ENCODE measurements at regions of chr1 and their contacts with region 1.

Region 1: GRCh38 chr1:25624156-25624555 is 7.6 kb downstream of the MAN1C1 start:
- DNase-seq: peak in 4 of 14 experiments; percentile 23 to 61 (median 50)
- ATAC-seq: no peak
- H3K4me3 ChIP-seq: no peak overlapping the region
- H3K4me3 Mint-ChIP-seq: peak overlapping the region; percentile 100
- H3K27ac ChIP-seq: no peak overlapping the region
- H3K27ac Mint-ChIP-seq: peak overlapping the region; percentile 93
- H3K4me1 ChIP-seq: peaks cover 60% of the 10 kb centered on the region
- H3K4me1 Mint-ChIP-seq: peaks cover 93% of the 10 kb centered on the region
- H3K27me3 ChIP-seq: no peaks in the 10 kb centered on the region
- H3K27me3 Mint-ChIP-seq: no peaks in the 10 kb centered on the region
- CTCF ChIP-seq: no peak

Region 2: GRCh38 chr1:25658791-25659431 is 34.8 kb after region 1 on chr1:
- CTCF ChIA-PET with region 1: interaction called, 6 read pairs
- POLR2A ChIA-PET with region 1: interaction called, 4 read pairs
- intact Hi-C with region 1: loop called in 1 of 2 experiments (anchors 5 kb)
- DNase-seq: no peak
- ATAC-seq: no peak
- H3K4me3 ChIP-seq: no peak overlapping the region
- H3K4me3 Mint-ChIP-seq: no peak overlapping the region
- H3K27ac ChIP-seq: no peak overlapping the region
- H3K27ac Mint-ChIP-seq: peak overlapping the region; percentile 57
- H3K4me1 ChIP-seq: peaks cover 19% of the 10 kb centered on the region
- H3K4me1 Mint-ChIP-seq: peaks cover 82% of the 10 kb centered on the region
- H3K27me3 ChIP-seq: no peaks in the 10 kb centered on the region
- H3K27me3 Mint-ChIP-seq: no peaks in the 10 kb centered on the region
- CTCF ChIP-seq: no peak

Region 3: DNA sequence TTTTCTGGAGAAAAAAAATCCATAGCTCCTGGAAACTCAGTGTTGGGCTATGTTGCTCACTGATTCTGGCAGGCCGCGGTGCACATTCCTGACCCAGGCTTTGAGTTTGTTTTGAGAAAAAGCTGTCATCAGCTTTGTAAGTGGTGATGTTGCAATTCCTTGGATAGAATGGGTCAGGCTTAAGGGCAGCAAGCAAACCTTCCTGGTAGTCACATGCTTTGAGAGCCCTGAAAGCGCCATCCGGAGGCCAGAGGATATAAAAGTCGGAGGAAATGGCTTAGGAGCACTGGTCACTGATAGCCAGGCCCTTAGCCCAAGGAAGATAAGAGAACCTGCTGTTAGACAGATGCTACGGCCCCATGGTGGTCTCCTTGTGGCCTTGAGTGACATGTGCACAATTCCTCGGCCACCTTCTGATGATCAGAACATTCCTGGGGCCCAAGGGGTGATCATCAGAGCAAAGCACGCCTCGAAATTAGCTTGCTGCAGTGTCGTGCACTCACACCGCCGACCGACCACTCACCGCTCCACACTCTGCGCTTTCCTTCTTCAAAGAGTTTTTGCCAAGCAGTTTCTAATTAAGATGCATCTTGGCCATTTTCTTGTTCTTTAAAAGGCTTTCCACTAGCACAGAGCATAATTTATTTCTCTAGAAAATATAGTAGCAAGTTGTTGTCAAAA is 71.1 kb after region 1 on chr1:
- CTCF ChIA-PET with region 1: interaction called, 6 read pairs
- POLR2A ChIA-PET with region 1: interaction called, 9 read pairs
- intact Hi-C with region 1: loop called (anchors 5 kb)
- DNase-seq: no peak
- ATAC-seq: no peak
- H3K4me3 ChIP-seq: no peak overlapping the region
- H3K4me3 Mint-ChIP-seq: no peak overlapping the region
- H3K27ac ChIP-seq: peak overlapping the region in 1 of 2 donors; percentile 39
- H3K27ac Mint-ChIP-seq: peak overlapping the region; percentile 74
- H3K4me1 ChIP-seq: peaks cover 48% of the 10 kb centered on the region
- H3K4me1 Mint-ChIP-seq: peaks cover 73% of the 10 kb centered on the region
- H3K27me3 ChIP-seq: no peaks in the 10 kb centered on the region
- H3K27me3 Mint-ChIP-seq: no peaks in the 10 kb centered on the region
- CTCF ChIP-seq: no peak